Activated CD4-positive, alpha-beta memory T cell treated with anti-CD3 and anti-CD28 coated beads for 36 hours (primary cell): ENCODE measurements at regions of chr6 and their contacts with region 1.

Region 1: DNA sequence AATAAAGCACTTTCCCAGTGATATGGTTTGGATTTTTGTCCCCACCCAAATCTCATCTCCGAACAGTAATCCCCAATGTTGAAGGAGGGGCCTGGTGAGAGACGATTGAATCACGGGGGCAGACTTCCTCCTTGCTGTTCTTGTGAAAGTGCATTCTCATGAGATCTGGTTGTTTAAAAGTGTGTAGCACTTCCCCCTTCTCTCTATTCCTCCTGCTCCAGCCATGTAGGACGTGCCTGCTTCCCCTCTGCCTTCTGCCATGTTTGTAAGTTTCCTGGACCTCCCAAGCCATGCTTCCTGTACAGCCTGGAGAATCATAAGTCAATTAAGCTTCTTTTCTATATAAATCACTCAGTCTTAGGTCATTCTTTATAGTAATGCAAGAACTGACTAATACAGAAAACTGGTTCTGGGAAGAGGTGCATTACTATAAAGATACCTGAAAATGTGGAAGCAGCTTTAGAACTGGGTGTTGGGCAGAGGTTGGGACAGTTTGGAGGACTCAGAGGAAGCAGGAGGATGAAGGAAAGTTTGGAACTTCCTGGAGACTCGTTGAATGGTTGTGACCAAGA is 7.4 kb downstream of the EPM2A start:
- DNase-seq: no peak
- H3K4me3 Mint-ChIP-seq: no peak overlapping the region
- H3K27ac Mint-ChIP-seq: no peak overlapping the region
- H3K4me1 Mint-ChIP-seq: peaks cover 30% of the 10 kb centered on the region
- H3K27me3 Mint-ChIP-seq: no peaks in the 10 kb centered on the region

Region 2: DNA sequence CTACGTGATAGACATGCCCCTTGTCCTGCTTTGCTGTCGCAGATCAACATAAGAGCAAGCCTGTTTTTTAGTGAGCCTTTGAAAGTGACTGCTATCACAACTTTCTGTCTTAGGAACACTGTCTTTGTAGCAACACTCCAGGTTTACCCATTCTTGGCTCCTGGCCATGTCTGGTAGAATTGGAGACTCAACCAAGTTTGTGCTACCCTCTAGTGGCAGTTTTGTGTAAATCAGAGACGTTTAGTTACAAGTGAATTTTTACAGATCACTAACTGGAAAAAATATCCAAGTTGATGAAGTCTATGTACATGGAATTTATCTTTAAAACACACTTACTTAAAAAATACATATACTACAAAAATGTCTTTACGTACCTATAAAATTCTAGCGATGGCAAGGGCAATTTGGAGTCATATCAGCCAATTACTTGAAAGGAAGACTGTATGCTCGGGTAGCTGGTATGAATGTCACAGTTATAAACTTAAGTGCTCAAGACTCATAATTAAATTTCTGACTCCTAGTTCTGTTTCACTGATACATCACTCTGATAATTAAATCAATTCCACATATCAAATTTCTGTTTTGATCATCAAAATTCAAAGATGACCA is 972.3 kb after region 1 on chr6:
- CTCF ChIA-PET with region 1: no interaction called
- POLR2A ChIA-PET with region 1: no interaction called
- intact Hi-C with region 1: loop called (anchors 5 kb)
- DNase-seq: peak; percentile 41
- H3K4me3 Mint-ChIP-seq: no peak overlapping the region
- H3K27ac Mint-ChIP-seq: no peak overlapping the region
- H3K4me1 Mint-ChIP-seq: no peaks in the 10 kb centered on the region
- H3K27me3 Mint-ChIP-seq: no peaks in the 10 kb centered on the region